ENCODE measurements at regions of chr1 and their contacts with region 1.

Region 1: GRCh38 chr1:9724706-9725476 is 73.4 kb downstream of the PIK3CD start:
- DNase-seq: peak; percentile 73
- H3K4me3 ChIP-seq: no peak overlapping the region
- H3K27ac ChIP-seq: no peak overlapping the region
- H3K4me1 ChIP-seq: peaks cover 0 to under 1% (median 0%) of the 10 kb centered on the region in 4 donors
- H3K27me3 ChIP-seq: no peaks in the 10 kb centered on the region
- CTCF ChIP-seq: peak; percentile 43 to 75 (median 73)
- EP300 ChIP-seq: no peak
- POLR2A ChIP-seq: no peak

Region 2: GRCh38 chr1:9629445-9630201 is 95.3 kb before region 1 on chr1:
- intact Hi-C with region 1: loop called (anchors 5 kb)
- DNase-seq: no peak
- H3K4me3 ChIP-seq: no peak overlapping the region
- H3K27ac ChIP-seq: no peak overlapping the region
- H3K4me1 ChIP-seq: peaks cover 0 to 11% (median 6%) of the 10 kb centered on the region in 4 donors
- H3K27me3 ChIP-seq: peaks cover 0 to 11% (median 0%) of the 10 kb centered on the region in 3 donors
- CTCF ChIP-seq: no peak
- EP300 ChIP-seq: no peak
- POLR2A ChIP-seq: no peak

Region 3: DNA sequence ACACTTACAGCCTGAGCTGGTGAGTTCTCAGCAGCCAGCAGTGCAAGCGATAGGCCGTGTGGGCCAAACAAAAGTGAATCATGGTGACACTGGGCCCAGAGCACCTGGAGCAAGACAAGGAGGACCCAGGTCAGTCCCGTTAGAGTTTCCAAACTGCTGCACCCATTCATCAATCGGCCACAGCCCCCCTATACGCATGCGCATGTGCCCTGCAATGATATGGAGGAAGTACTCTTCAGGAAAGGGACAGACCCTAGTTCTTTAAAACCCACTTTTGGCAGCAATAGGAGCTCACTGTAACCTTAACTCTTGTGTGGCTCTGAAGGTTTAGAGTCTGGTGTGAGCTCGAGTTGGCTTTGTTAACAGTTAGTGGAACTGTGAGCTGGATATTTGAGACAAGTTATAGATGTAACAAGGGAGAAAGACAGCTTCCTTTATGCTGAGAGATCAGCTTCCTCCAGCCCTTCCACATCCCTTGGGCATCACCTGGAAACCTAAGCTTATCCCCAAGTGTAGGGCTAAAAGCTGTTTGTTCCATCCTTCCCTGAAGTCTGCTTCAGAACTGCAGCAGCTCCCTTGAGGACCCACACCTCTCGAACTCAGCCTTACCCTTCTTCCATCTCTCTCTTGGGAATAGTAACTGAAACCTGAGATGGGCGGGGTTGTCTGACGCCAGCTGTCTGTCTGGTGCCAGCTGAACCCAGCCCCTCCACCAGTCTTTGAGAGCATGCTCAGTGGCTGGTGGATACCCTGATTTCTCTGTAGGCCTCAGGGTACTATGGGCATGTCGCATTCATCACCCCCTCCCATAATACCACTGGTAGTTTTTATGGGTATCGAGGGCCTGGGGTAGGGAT is 236.0 kb after region 1 on chr1:
- intact Hi-C with region 1: no loop called
- DNase-seq: no peak
- H3K4me3 ChIP-seq: no peak overlapping the region
- H3K27ac ChIP-seq: no peak overlapping the region
- H3K4me1 ChIP-seq: no peaks in the 10 kb centered on the region
- H3K27me3 ChIP-seq: no peaks in the 10 kb centered on the region
- CTCF ChIP-seq: no peak
- EP300 ChIP-seq: no peak
- POLR2A ChIP-seq: no peak

Measured in sigmoid colon (tissue), 7 donors.